Lower leg skin (tissue), 4 donors: ENCODE measurements at regions of chr6 and their contacts with region 1.

Region 1: DNA sequence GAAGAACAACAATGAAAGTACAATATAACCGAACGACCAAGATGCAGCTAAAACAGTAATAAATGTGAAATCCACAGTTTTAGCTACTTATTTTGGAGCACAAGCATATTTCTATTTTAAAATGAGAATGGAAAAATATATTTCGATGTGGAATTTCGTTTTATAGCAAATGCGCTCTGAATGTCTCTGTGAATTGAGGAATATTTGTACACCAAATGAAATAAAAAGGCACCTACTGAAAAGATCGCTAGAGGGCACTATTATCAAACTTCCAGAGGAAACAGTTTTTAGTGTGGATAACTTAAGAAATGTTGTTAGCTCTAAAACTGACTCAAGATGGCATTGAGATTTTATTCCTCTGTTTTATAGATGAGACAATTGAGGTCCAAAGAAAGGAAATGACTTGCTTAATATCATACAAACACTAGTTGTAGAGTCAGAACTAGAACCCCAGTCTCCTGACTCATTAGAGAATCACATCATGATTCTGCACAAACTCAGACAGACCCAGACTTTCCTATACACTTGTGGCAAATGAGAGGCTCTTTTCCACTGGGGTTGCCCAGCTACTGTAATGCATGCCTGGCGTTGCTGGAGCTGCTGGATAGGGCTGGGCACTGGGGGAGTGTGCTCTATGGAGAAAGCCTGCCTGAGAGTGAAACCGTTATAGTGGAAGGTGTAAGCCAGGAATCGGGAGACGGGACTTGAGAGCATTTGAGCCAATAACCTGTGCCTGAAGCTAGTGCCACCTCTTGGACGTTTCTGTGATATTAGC is 51.9 kb downstream of the GCLC start:
- DNase-seq: no peak
- H3K4me3 ChIP-seq: no peak overlapping the region
- CTCF ChIP-seq: no peak
- POLR2A ChIP-seq: no peak

Region 2: DNA sequence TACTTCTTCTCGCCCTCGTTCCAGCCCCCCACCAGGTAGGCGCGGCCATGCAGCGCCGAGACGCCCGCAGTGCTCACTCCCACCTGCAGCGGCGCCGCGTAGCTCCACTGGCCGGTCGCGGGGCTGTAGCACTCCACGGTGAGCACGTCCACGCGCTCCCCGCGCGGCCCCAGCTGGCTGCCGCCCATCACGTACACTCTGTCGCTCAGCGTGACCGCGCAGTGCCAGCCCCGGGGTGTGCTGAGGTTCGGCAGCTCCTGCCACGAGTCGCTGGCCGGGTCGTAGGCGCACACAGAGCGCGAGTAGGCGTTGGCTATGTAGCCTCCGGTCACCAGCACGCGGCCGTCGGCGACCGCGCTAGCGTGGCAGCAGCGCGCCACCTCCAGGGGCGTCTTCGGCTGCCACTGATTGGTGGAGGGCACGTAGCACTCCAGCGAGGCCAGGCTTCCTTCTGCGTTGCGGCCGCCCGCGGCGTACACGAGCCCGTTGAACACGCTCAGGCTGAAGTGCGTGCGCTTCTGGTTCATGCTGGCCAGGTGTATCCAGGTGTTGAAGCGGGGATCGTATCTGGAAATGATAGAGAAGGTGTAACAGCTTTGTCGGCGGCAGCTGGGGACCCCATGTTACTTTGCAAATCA is 158.8 kb after region 1 on chr6:
- intact Hi-C with region 1: loop called (anchors 5 kb)
- DNase-seq: peak; percentile 59 to 90
- H3K4me3 ChIP-seq: peak overlapping the region; percentile 40
- CTCF ChIP-seq: no peak
- POLR2A ChIP-seq: no peak

Region 3: DNA sequence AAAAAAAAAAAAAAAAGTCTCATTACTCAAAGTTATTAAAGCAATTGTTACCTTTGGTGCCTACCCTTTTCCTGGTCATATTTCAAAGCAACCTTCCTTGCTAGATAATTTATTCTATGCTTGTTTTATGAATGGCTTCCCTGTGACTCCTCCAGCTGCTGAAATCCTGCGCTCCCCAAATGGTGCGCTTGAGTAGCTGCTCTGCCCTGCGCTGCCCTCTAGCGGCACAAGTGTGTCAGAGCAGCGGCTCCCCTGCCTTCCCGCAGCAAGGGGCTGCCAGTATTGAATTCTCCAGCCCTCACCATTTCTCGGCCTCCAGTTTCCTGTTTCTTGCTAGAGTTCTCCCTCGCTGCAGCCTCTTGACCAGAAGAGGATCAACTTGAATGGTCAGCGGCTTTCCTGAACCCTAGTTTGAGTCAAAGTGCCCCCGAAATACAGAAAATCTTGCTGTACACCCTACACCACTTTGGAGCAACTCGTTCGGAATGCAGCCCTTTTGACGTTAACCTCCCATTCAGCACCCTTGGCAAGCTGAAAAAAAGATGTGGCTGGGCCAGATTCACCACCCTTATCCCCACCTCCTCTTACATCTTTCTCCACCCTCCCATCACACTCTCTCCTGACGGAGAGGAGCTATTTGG is 232.9 kb after region 1 on chr6:
- intact Hi-C with region 1: loop called (anchors 10 kb)
- DNase-seq: peak; percentile 68 to 93
- H3K4me3 ChIP-seq: no peak overlapping the region
- CTCF ChIP-seq: peak in 1 of 3 donors; percentile 68
- POLR2A ChIP-seq: no peak

Region 4: DNA sequence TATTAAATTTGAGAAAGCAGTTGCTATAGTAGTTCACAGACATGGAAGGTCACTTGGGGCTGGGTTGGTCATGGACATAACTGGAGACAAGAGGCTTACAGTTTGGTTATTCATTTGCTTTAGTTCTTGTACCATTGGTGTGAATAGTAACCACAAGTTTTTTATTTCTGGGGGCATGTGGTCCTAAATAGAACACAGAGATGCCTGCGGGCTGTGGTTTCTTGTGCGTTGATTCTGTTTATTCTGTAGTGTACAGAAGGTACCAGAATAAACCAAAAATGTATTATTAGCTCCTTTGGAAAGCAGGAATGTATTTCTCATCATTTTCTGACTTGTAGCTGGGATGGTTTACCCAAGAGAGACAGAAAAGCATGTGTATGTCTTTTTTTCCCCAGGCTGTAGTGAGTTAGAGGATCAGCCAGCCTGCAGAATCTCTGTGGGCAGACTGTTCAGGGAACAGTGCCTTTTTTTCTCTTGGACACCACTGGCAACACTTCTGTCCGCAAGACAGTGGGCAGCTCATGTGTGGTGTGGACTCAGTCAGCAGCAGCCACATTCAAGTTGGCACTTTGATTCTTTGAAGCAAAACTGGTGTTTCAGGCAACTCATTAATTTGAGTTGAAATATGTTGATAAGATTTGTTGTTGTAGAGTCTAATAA is 423.9 kb after region 1 on chr6:
- intact Hi-C with region 1: no loop called
- DNase-seq: no peak
- H3K4me3 ChIP-seq: no peak overlapping the region
- CTCF ChIP-seq: no peak
- POLR2A ChIP-seq: no peak